ENCODE measurements at regions of chr12 and their contacts with region 1.

Region 1: GRCh38 chr12:88393017-88393767 is 187.1 kb downstream of the KITLG start:
- DNase-seq: no peak
- ATAC-seq: peak; percentile 33
- H3K4me3 ChIP-seq: no peak overlapping the region
- H3K27ac ChIP-seq: no peak overlapping the region
- H3K4me1 ChIP-seq: peaks cover 6% of the 10 kb centered on the region
- H3K27me3 ChIP-seq: no peaks in the 10 kb centered on the region
- CTCF ChIP-seq: peak; percentile 35 to 43 (median 38); a peak in 5 of 6 replicates
- EP300 ChIP-seq: no peak
- POLR2A ChIP-seq: no peak
- RAD21 ChIP-seq: peak; percentile 62

Region 2: GRCh38 chr12:88035271-88035906 is 357.8 kb before region 1 on chr12:
- CTCF ChIA-PET with region 1: no interaction called
- POLR2A ChIA-PET with region 1: no interaction called
- RAD21 ChIA-PET with region 1: no interaction called
- SMC1A ChIA-PET with region 1: interaction called, 3 read pairs
- in situ Hi-C with region 1: no loop called
- intact Hi-C with region 1: loop called (anchors 10 kb)
- DNase-seq: peak; percentile 31
- ATAC-seq: peak; percentile 97
- H3K4me3 ChIP-seq: peak overlapping the region; percentile 86
- H3K27ac ChIP-seq: peak overlapping the region; percentile 69
- H3K4me1 ChIP-seq: no peaks in the 10 kb centered on the region
- H3K27me3 ChIP-seq: no peaks in the 10 kb centered on the region
- CTCF ChIP-seq: no peak
- EP300 ChIP-seq: no peak
- POLR2A ChIP-seq: peak; percentile 97
- RAD21 ChIP-seq: no peak

Region 3: GRCh38 chr12:88153959-88154358 is 239.2 kb before region 1 on chr12:
- CTCF ChIA-PET with region 1: interaction called, 33 read pairs
- POLR2A ChIA-PET with region 1: interaction called, 13 read pairs
- RAD21 ChIA-PET with region 1: interaction called, 12 read pairs
- SMC1A ChIA-PET with region 1: interaction called, 37 read pairs
- in situ Hi-C with region 1: no loop called
- intact Hi-C with region 1: loop called (anchors 5 kb)
- DNase-seq: no peak
- ATAC-seq: 0 out of 3 replicates have a peak, but pooled peaks have one; percentile 25
- H3K4me3 ChIP-seq: no peak overlapping the region
- H3K27ac ChIP-seq: no peak overlapping the region
- H3K4me1 ChIP-seq: no peaks in the 10 kb centered on the region
- H3K27me3 ChIP-seq: no peaks in the 10 kb centered on the region
- CTCF ChIP-seq: peak in 1 of 3 experiments; percentile 17; a peak in 1 of 6 replicates
- EP300 ChIP-seq: no peak
- POLR2A ChIP-seq: no peak
- RAD21 ChIP-seq: peak; percentile 46; the same call in 1 of the 2 replicates

Region 4: GRCh38 chr12:88310069-88310468 is 83.1 kb before region 1 on chr12:
- CTCF ChIA-PET with region 1: interaction called, 6 read pairs
- POLR2A ChIA-PET with region 1: interaction called, 4 read pairs
- RAD21 ChIA-PET with region 1: interaction called, 11 read pairs
- SMC1A ChIA-PET with region 1: interaction called, 27 read pairs
- in situ Hi-C with region 1: no loop called
- intact Hi-C with region 1: no loop called
- DNase-seq: no peak
- ATAC-seq: no peak
- H3K4me3 ChIP-seq: no peak overlapping the region
- H3K27ac ChIP-seq: no peak overlapping the region
- H3K4me1 ChIP-seq: no peaks in the 10 kb centered on the region
- H3K27me3 ChIP-seq: no peaks in the 10 kb centered on the region
- CTCF ChIP-seq: no peak
- EP300 ChIP-seq: no peak
- POLR2A ChIP-seq: no peak
- RAD21 ChIP-seq: no peak

Region 5: DNA sequence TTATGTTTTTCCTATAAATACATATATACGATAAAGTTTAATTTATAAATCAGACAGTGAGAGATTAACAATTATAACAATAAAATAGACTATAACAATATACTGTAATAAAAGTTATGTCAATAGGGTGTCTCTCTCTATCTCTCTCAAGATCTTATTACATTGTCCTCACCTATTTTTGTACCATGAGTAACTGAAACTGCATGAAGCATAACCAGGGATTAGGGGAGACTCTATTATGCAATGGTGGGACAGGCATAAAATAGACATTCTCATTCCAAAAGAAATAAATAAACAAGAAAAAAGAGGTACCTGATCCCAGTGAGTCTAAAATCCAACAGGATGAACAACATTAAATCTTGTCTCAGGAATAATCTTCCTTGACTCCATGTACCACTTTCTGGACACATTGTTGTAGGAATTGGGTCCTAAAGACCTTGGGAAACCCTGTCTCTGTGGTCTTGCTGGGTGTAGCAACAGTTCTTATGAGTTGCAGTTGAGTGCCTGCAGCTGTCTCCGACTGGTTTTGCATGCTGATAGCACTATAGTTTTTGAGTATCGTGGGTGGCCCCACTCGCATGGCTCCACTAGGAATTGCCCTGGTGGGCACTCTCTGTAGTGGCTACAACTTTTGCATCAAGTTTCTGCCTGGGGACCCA is 17.8 kb before region 1 on chr12:
- CTCF ChIA-PET with region 1: interaction called, 10 read pairs
- POLR2A ChIA-PET with region 1: no interaction called
- RAD21 ChIA-PET with region 1: no interaction called
- SMC1A ChIA-PET with region 1: no interaction called
- in situ Hi-C with region 1: no loop called
- intact Hi-C with region 1: no loop called
- DNase-seq: no peak
- ATAC-seq: peak; percentile 20; the same call in 1 of the 3 replicates
- H3K4me3 ChIP-seq: no peak overlapping the region
- H3K27ac ChIP-seq: no peak overlapping the region
- H3K4me1 ChIP-seq: no peaks in the 10 kb centered on the region
- H3K27me3 ChIP-seq: no peaks in the 10 kb centered on the region
- CTCF ChIP-seq: no peak
- EP300 ChIP-seq: no peak
- POLR2A ChIP-seq: no peak
- RAD21 ChIP-seq: no peak